K562 (cell line): ENCODE measurements at regions of chr22 and their contacts with region 1.

Region 1: GRCh38 chr22:20640999-20641892 is 132.7 kb upstream of the SERPIND1 start:
- DNase-seq: no peak
- ATAC-seq: no peak; the same call in 2 of the 3 replicates
- H3K4me3 ChIP-seq: no peak overlapping the region
- H3K27ac ChIP-seq: no peak overlapping the region
- H3K4me1 ChIP-seq: peaks cover 0 to 3% of the 10 kb centered on the region in 2 experiments; a peak in 1 of 5 replicates
- H3K27me3 ChIP-seq: peaks cover 32 to 49% of the 10 kb centered on the region in 2 experiments
- CTCF ChIP-seq: no peak
- EP300 ChIP-seq: no peak
- POLR2A ChIP-seq: no peak
- RAD21 ChIP-seq: no peak

Region 2: DNA sequence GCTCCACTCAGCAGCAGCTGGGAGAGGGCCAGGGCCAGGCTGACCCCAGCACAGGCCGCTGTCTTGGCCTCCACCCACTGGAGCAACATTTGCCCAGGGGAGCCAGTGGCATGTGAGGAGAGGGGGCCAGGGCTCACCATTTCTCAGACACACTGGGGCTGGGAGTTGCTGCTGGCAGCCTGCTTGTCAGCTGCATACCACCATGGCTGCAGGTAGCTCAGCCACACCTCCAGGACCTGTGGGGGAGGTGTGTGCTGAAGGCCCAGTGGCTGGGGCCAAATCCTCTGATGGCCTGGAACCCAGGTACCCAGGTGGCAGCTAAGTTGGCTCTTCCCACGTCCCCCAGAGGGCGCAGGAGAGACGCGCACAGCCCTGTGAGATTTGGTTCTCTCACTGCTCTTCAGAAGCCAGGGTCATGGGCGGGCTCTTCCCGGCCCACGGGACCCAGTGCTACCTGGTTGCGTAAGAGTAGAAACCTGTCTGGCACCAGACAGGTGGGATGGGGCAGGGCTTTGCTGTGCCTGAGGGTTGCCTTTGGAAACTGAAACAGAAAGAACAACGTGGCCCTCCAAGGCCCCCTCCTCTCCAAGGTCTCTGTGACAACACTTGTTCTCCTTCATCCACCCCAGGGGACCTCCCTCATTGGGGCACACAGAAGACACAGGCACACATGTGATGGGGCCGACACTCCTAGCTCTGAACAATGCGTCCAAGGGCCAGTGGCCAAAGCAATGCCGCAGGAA is 35.0 kb before region 1 on chr22:
- CTCF ChIA-PET with region 1: no interaction called
- POLR2A ChIA-PET with region 1: interaction called, 234 read pairs
- in situ Hi-C with region 1: no loop called
- intact Hi-C with region 1: no loop called
- DNase-seq: peak; percentile 92 to 97 (median 95)
- ATAC-seq: peak; percentile 83
- H3K4me3 ChIP-seq: no peak overlapping the region
- H3K27ac ChIP-seq: no peak overlapping the region
- H3K4me1 ChIP-seq: peaks cover 0 to 45% of the 10 kb centered on the region in 2 experiments; a peak in 2 of 5 replicates
- H3K27me3 ChIP-seq: peaks cover 58 to 99% of the 10 kb centered on the region in 2 experiments; a peak in 4 of 5 replicates
- CTCF ChIP-seq: peak; percentile 98 to 100 (median 99)
- EP300 ChIP-seq: peak; percentile 51
- POLR2A ChIP-seq: no peak
- RAD21 ChIP-seq: peak; percentile 96 to 100; a peak in 3 of 4 replicates

Region 3: GRCh38 chr22:20615021-20615420 is 26.2 kb before region 1 on chr22:
- CTCF ChIA-PET with region 1: no interaction called
- POLR2A ChIA-PET with region 1: interaction called, 234 read pairs
- in situ Hi-C with region 1: no loop called
- intact Hi-C with region 1: loop called (anchors 2 kb)
- DNase-seq: no peak
- ATAC-seq: no peak; the same call in 2 of the 3 replicates
- H3K4me3 ChIP-seq: no peak overlapping the region
- H3K27ac ChIP-seq: no peak overlapping the region
- H3K4me1 ChIP-seq: peaks cover 7 to 13% of the 10 kb centered on the region in 2 experiments; a peak in 3 of 5 replicates
- H3K27me3 ChIP-seq: peaks cover 67 to 71% of the 10 kb centered on the region in 2 experiments
- CTCF ChIP-seq: no peak
- EP300 ChIP-seq: peak; percentile 70
- POLR2A ChIP-seq: no peak
- RAD21 ChIP-seq: no peak

Region 4: GRCh38 chr22:20630873-20631617 is 10.2 kb before region 1 on chr22:
- CTCF ChIA-PET with region 1: no interaction called
- POLR2A ChIA-PET with region 1: interaction called, 41 read pairs
- in situ Hi-C with region 1: no loop called
- intact Hi-C with region 1: no loop called
- DNase-seq: no peak
- ATAC-seq: no peak
- H3K4me3 ChIP-seq: no peak overlapping the region
- H3K27ac ChIP-seq: no peak overlapping the region
- H3K4me1 ChIP-seq: peaks cover 0 to 4% of the 10 kb centered on the region in 2 experiments; a peak in 2 of 5 replicates
- H3K27me3 ChIP-seq: peaks cover 36 to 73% of the 10 kb centered on the region in 2 experiments
- CTCF ChIP-seq: no peak
- EP300 ChIP-seq: no peak
- POLR2A ChIP-seq: no peak
- RAD21 ChIP-seq: no peak

Region 5: DNA sequence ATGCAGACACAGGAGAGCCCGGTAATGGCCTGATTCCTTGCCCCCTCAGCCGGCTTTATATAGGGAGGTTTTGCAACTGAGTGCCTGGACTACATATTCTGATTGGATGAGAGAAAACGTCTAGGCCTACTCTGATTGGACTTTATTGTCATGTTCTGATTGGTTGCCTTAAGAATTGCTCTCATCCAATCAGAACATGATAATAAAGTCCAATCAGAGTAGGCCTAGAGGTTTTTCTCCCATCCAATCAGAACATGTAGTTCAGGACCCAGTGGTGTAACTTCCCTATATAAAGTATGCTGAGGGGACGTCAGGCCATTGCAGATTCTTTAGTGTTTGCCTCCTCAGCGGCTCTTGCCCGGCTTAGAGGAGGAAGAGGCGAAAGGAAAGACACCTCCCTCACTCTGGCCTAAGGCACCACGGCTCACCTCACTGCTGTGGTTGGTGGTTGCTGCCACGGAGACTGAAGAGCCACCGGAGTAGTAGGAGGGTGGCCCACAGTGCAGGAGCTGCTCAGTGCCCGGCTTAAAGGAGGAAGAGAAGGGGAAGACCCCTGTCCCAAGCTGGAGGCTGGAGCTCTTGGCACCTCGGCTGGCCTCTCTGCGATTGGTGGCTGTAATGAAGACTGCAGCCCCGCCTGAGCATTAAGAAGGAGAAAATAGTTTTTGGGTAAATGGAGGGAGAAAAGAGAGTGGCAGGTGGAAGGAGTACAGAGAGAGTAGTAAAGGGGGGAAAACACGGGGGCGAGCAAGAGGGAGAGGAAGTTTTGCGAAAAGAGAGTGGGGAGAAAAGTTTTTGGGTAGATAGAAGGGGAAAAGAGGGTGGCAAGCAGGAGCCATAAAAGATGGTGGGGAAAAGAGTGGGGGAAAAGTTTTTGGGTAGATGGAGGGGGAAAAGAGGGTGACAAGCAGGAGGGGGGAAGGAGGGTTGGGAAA is 15.9 kb after region 1 on chr22:
- CTCF ChIA-PET with region 1: no interaction called
- POLR2A ChIA-PET with region 1: interaction called, 11 read pairs
- in situ Hi-C with region 1: no loop called
- intact Hi-C with region 1: no loop called
- DNase-seq: peak; percentile 80 to 94 (median 86)
- ATAC-seq: peak; percentile 86
- H3K4me3 ChIP-seq: peak overlapping the region; percentile 37
- H3K27ac ChIP-seq: peak overlapping the region; percentile 58; the same call in 2 of the 3 replicates
- H3K4me1 ChIP-seq: peaks cover 0 to 9% of the 10 kb centered on the region in 2 experiments; a peak in 3 of 5 replicates
- H3K27me3 ChIP-seq: peaks cover 39 to 45% of the 10 kb centered on the region in 2 experiments
- CTCF ChIP-seq: no peak; a peak in 1 of 6 replicates
- EP300 ChIP-seq: no peak
- POLR2A ChIP-seq: peak; percentile 96
- RAD21 ChIP-seq: 0 out of 4 replicates have a peak, but pooled peaks of 1 of the 2 experiments have one; percentile 5